Dorsolateral prefrontal cortex (tissue), 120 donors: ENCODE measurements at regions of chr14 and their contacts with region 1.

Region 1: DNA sequence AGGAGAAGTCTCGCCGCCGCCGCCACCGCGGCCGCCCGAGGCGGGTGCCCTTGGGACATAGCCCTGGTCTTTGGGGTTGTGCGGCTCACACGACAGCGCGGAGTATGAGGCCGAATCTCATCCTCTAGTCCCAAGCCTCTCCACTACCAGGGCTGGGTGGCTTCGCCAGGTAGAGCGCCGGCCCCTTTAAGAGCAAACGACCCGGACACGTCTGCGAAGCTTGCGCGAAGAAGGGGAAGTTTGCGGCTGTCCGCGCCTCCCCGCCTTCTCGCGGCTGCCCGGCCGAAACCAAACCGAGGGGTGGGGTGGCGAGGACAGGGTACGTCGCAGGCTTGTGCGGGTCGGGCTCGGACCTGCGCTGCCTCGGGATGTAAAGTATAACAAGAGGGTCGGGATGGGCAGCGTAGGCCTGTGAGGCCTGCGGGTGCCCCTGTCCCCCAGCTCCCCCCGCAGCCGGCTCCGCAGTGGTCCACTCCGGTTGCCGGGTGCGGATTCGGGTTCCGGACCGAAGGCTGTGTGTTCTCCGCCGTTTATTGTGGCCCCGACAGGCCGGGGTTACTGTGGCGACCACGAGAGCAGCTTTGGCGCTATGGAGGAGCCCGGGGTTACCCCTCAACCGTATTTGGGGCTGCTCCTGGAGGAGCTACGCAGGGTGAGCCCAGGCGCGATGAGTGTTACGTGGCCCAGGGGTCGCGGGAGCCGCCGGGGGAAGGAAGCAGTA is 33.3 kb downstream of the MIA2 start:
- DNase-seq: peak; percentile 50 to 86 (median 78)
- H3K4me3 ChIP-seq: peak overlapping the region; percentile 58 to 98 (median 91)
- H3K27ac ChIP-seq: peak overlapping the region; percentile 80 to 100 (median 97)
- H3K27me3 ChIP-seq: no peaks in the 10 kb centered on the region
- CTCF ChIP-seq: peak in 8 of 56 donors; percentile 2 to 31 (median 14)

Region 2: DNA sequence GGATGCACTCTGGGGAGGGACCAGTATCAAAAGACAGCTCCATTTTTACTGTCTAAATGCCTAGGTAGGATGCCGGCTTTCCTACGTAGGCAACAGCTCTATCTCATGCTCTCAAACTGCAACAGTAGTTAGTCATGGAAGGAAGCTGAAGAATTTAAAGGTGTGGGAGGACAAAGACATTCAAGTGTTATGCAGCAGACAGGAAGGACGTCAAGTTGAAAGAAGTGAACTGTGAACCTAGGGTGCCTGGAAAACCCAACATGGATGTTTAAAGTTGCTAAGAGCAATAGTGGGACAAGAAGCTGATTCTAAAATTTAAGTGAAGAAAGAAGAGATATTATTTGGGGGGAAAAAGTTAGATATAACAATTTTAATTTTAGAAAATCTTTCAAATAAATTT is 169.9 kb before region 1 on chr14:
- intact Hi-C with region 1: no loop called
- DNase-seq: no peak
- H3K4me3 ChIP-seq: no peak overlapping the region
- H3K27ac ChIP-seq: peak overlapping the region in 1 of 59 donors; percentile 40
- H3K27me3 ChIP-seq: no peaks in the 10 kb centered on the region
- CTCF ChIP-seq: no peak

Region 3: DNA sequence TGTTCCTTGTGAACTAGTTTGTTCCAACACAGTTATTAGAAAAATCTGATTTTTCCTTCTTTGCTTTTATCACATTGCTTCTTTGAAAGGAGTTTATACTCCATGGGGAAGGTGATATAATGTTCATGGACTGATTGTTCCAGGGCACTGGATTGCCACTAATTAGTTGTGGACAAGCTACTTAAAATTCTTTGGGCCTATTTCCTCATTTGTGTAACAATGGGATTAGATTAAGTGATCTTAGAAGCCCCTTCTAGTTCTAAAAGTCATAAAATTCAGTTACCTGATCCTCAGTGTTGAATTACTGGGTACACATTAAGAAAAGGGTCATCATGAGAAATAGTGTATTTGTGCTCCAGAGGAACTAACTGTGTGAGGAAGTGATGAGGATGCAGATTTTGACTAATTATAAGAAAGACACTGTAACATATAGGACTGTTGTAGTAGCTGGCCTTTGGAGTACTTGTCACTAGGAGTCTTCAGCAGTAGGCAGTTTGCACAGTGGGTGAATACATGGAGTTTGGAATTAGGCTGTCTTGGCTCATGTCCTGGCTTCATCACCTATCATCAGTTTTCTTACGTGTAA is 48.9 kb after region 1 on chr14:
- intact Hi-C with region 1: no loop called
- DNase-seq: no peak
- H3K4me3 ChIP-seq: no peak overlapping the region
- H3K27ac ChIP-seq: no peak overlapping the region
- H3K27me3 ChIP-seq: no peaks in the 10 kb centered on the region
- CTCF ChIP-seq: no peak

Region 4: DNA sequence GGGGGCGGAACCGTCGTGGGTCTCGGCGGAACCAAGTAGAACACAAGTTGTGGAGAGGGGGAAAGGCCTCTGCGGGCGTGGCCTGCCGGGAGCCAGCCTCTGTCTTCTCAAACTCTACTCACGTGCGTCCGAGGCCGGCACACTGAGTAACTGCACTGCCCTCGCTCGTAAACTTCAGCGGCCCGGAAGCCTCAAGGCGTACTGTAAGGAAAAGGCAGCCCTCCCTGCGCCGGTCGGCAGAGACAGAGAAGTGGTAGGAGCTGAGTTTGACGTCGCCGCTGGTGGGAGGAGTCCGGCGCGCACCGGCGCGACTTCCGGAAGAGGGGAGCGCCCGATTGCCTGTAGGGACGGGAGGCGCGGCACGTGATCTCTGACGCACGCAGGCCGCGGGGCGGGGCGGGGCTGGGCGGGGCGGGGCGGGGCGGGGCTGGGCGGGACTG is 165.2 kb after region 1 on chr14 and contains the start of gene FBXO33:
- intact Hi-C with region 1: loop called (anchors 2 kb)
- DNase-seq: peak; percentile 94 to 98 (median 96)
- H3K4me3 ChIP-seq: peak within 1 kb of the TSS; percentile 73 to 100 (median 93)
- H3K27ac ChIP-seq: peak within 1 kb of the TSS; percentile 83 to 99 (median 98)
- H3K27me3 ChIP-seq: no peaks in the 10 kb centered on the region
- CTCF ChIP-seq: peak in 5 of 56 donors; percentile 1 to 10 (median 5)
- total RNA-seq, gene FBXO33: 13.8 to 42.2 (median 27.4) TPM